ENCODE measurements at regions of chr19 and their contacts with region 1.

Region 1: GRCh38 chr19:40139533-40140287 is 49.0 kb upstream of the ZNF780A start:
- DNase-seq: peak; percentile 50
- H3K4me3 ChIP-seq: no peak overlapping the region
- H3K27ac ChIP-seq: no peak overlapping the region
- H3K4me1 ChIP-seq: no peaks in the 10 kb centered on the region
- H3K27me3 ChIP-seq: peaks cover 2 to 6% of the 10 kb centered on the region in 2 experiments
- CTCF ChIP-seq: peak; percentile 46 to 56
- POLR2A ChIP-seq: no peak

Region 2: GRCh38 chr19:40165362-40165937 is 25.7 kb after region 1 on chr19:
- CTCF ChIA-PET with region 1: interaction called, 38 read pairs
- POLR2A ChIA-PET with region 1: no interaction called
- dilution Hi-C with region 1: no loop called
- intact Hi-C with region 1: no loop called
- DNase-seq: peak; percentile 47
- H3K4me3 ChIP-seq: no peak overlapping the region
- H3K27ac ChIP-seq: no peak overlapping the region
- H3K4me1 ChIP-seq: no peaks in the 10 kb centered on the region
- H3K27me3 ChIP-seq: no peaks in the 10 kb centered on the region
- CTCF ChIP-seq: peak; percentile 60 to 79
- POLR2A ChIP-seq: no peak

Region 3: DNA sequence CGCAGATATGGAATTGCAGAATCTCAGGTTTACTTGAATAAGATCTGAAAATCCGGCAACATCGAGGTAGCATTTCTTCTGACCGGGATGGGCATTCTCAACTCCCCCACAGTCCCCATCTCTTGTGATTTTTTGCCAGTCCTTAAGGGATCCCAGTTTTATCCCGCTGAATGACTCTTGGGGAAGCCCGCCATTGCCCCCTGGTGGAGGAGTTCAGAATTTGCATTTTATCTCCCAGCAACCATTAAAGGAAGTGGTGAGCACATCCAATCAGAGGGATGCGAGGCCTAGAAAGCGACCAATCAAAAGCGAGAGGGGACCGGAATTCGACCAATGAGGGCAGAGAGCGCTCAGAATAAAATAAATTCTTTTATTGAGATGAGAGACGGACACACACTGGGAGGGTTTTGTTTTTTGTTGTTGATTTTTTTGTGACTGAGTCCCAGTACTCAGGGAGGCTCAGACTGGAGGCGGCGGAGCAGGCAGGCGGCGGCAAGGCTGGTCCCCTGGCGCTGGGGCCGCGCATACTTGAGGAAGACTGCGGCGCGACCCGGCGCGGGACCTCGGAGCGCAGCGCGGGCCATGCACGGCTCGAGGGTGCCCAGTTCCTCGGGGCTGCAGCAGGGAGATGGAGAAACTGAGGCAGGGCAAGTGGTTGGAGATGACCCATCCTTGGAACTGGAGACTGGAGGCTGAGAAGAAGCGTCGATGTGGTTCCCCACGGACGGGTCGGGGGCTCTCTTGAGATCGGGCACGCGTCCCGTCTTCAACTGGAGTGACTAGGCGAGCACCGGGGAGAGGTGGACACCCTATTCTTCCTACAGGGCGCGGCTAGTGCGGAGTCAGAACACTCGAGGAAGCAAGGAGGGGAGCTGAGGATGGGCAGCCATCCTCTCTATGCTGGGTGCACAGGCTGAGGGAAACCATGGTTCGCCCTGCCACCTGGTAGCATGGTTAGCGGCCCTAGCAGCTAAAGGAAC is 82.4 kb after region 1 on chr19:
- CTCF ChIA-PET with region 1: interaction called, 19 read pairs
- POLR2A ChIA-PET with region 1: no interaction called
- dilution Hi-C with region 1: no loop called
- intact Hi-C with region 1: loop called (anchors 1 kb)
- DNase-seq: peak; percentile 91
- H3K4me3 ChIP-seq: no peak overlapping the region
- H3K27ac ChIP-seq: no peak overlapping the region
- H3K4me1 ChIP-seq: peaks cover 11% of the 10 kb centered on the region
- H3K27me3 ChIP-seq: peaks cover 22 to 30% of the 10 kb centered on the region in 2 experiments
- CTCF ChIP-seq: peak; percentile 73 to 88
- POLR2A ChIP-seq: no peak

Region 4: DNA sequence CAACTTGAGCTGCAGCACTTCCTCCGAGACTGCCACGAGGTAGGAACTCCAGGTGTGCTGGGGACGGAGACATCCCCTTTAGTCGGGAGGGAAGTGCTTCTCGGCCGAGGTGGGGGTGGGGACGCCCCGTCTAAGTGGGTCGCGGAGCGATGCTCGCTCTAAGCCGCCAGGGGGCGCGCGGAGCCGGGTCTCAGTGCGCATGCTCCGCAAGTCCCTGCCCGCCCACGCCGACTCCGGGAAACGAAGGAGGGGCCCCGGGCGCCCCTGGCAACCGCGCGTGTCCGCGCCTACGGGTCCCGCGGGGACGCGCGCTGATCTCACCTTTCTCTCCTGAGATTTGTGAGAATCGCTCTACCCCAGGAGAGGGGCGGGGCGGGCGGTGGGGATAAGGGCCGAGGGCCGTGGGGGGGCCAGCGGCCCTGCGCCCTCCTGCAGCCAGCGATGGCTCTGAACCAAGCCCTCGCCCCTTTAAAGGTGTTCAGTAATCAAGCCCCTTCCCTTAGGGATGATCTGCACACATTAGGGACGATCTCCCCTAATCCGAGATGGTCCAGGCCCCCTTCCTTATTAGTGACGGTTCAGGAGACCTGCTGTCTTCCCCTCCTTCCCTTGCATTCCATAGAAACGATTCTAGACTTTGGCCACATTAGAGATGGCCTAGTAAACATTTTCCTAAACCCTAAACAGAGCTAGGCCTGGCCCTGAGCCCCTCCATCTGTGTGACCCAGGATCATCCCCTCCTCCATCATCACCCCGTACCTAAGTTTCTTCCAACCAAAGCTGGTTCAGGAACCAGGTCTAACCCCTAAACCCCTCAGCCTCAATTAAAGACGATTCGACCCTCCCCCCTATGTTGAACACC is 389.6 kb after region 1 on chr19:
- CTCF ChIA-PET with region 1: no interaction called
- POLR2A ChIA-PET with region 1: no interaction called
- dilution Hi-C with region 1: no loop called
- intact Hi-C with region 1: loop called (anchors 10 kb)
- DNase-seq: peak; percentile 87
- H3K4me3 ChIP-seq: peak overlapping the region in 1 of 3 experiments; percentile 27
- H3K27ac ChIP-seq: no peak overlapping the region
- H3K4me1 ChIP-seq: no peaks in the 10 kb centered on the region
- H3K27me3 ChIP-seq: peaks cover 2 to 6% of the 10 kb centered on the region in 2 experiments
- CTCF ChIP-seq: peak; percentile 93 to 98
- POLR2A ChIP-seq: no peak

Region 5: GRCh38 chr19:40640744-40641143 is 501.0 kb after region 1 on chr19:
- CTCF ChIA-PET with region 1: interaction called, 22 read pairs
- POLR2A ChIA-PET with region 1: no interaction called
- dilution Hi-C with region 1: no loop called
- intact Hi-C with region 1: loop called (anchors 10 kb)
- DNase-seq: peak; percentile 19
- H3K4me3 ChIP-seq: no peak overlapping the region
- H3K27ac ChIP-seq: peak overlapping the region; percentile 10
- H3K4me1 ChIP-seq: peaks cover 14% of the 10 kb centered on the region
- H3K27me3 ChIP-seq: no peaks in the 10 kb centered on the region
- CTCF ChIP-seq: no peak
- POLR2A ChIP-seq: no peak